B cell (primary cell): ENCODE measurements at regions of chr16 and their contacts with region 1.

Region 1: DNA sequence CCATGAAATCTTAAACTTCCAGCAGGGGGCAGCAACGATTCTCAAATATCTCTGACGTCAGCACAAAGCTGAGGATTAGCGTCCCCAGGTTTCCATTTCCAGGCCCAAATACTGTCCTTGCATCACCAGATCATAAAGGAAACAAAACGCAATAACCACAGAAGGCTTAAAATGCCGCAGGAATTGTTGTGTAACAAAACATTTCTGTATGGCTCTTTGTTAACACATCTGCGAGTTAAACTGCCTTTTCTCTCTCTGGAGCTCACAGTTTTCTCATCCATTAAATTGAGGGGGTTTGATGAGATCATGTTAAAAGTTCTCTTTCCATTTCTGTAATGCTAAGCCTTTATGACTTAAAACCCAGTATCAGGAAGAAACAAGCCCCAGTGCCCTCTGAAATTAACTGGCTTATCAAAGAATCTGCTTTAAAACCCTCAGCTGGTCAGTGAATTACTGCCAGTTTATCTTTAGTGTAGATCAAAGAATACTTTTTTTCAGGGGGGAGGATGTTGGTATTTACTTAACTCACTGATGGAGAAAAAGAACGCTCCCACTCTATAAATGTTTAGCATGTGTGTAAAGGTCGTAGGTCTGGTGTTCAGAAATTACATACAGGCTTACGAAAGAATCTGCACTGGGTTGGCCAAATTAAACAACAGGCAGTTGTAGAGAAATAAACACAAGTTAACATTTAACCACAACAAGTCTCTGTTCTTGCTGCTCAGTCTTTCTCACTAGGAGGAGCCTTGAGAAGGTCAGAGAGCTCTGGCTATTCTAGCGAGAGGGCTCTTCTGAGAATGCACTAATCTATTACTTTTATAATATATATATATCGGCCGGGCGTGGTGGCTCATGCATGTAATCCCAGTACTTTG is 10.6 kb upstream of the TERF2 start:
- DNase-seq: peak; percentile 83
- ATAC-seq: peak; percentile 73
- H3K4me3 ChIP-seq: no peak overlapping the region
- H3K4me3 Mint-ChIP-seq: no peak overlapping the region
- H3K27ac ChIP-seq: peak overlapping the region in 1 of 2 donors; percentile 4
- H3K27ac Mint-ChIP-seq: no peak overlapping the region
- H3K4me1 ChIP-seq: no peaks in the 10 kb centered on the region
- H3K4me1 Mint-ChIP-seq: peaks cover 3% of the 10 kb centered on the region
- H3K27me3 ChIP-seq: no peaks in the 10 kb centered on the region
- H3K27me3 Mint-ChIP-seq: no peaks in the 10 kb centered on the region
- CTCF ChIP-seq: peak; percentile 82

Region 2: GRCh38 chr16:69417520-69418199 is 21.2 kb after region 1 on chr16:
- CTCF ChIA-PET with region 1: interaction called, 5 read pairs
- POLR2A ChIA-PET with region 1: interaction called, 15 read pairs
- intact Hi-C with region 1: no loop called
- DNase-seq: no peak
- ATAC-seq: no peak
- H3K4me3 ChIP-seq: no peak overlapping the region
- H3K4me3 Mint-ChIP-seq: no peak overlapping the region
- H3K27ac ChIP-seq: no peak overlapping the region
- H3K27ac Mint-ChIP-seq: no peak overlapping the region
- H3K4me1 ChIP-seq: no peaks in the 10 kb centered on the region
- H3K4me1 Mint-ChIP-seq: no peaks in the 10 kb centered on the region
- H3K27me3 ChIP-seq: no peaks in the 10 kb centered on the region
- H3K27me3 Mint-ChIP-seq: no peaks in the 10 kb centered on the region
- CTCF ChIP-seq: no peak

Region 3: DNA sequence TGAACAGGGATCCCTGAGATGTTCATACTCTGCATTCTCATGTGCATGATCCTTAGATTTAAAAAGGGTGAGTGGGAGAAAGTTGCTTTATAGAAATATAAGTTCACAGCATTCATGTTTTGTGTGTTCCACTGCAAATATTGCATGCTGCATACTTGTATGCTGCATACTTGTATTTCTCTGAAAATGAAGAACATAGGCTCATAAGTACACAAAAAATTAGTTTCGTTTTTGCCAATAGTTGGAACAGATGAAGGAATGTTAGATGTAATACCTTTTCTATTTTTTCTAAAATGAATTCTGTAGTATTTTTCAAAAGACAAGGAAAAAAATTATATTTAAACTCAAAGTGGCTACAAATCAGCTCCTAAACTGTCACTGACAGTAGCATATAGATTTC is 248.4 kb after region 1 on chr16:
- CTCF ChIA-PET with region 1: interaction called, 4 read pairs
- POLR2A ChIA-PET with region 1: no interaction called
- intact Hi-C with region 1: loop called (anchors 5 kb)
- DNase-seq: no peak
- ATAC-seq: no peak
- H3K4me3 ChIP-seq: no peak overlapping the region
- H3K4me3 Mint-ChIP-seq: no peak overlapping the region
- H3K27ac ChIP-seq: no peak overlapping the region
- H3K27ac Mint-ChIP-seq: no peak overlapping the region
- H3K4me1 ChIP-seq: no peaks in the 10 kb centered on the region
- H3K4me1 Mint-ChIP-seq: no peaks in the 10 kb centered on the region
- H3K27me3 ChIP-seq: no peaks in the 10 kb centered on the region
- H3K27me3 Mint-ChIP-seq: no peaks in the 10 kb centered on the region
- CTCF ChIP-seq: no peak

Region 4: GRCh38 chr16:69754469-69755310 is 358.3 kb after region 1 on chr16 and contains the start of gene NOB1:
- CTCF ChIA-PET with region 1: interaction called, 33 read pairs
- POLR2A ChIA-PET with region 1: interaction called, 3 read pairs
- intact Hi-C with region 1: loop called (anchors 1 kb)
- DNase-seq: peak; percentile 99
- ATAC-seq: peak; percentile 96
- H3K4me3 ChIP-seq: peak within 1 kb of the TSS; percentile 73 to 100 (median 91)
- H3K4me3 Mint-ChIP-seq: peak within 1 kb of the TSS; percentile 99
- H3K27ac ChIP-seq: peak within 1 kb of the TSS; percentile 61 to 76
- H3K27ac Mint-ChIP-seq: peak within 1 kb of the TSS; percentile 94
- H3K4me1 ChIP-seq: peaks cover 8 to 20% of the 10 kb centered on the region in 2 donors
- H3K4me1 Mint-ChIP-seq: peaks cover 21% of the 10 kb centered on the region
- H3K27me3 ChIP-seq: no peaks in the 10 kb centered on the region
- H3K27me3 Mint-ChIP-seq: no peaks in the 10 kb centered on the region
- CTCF ChIP-seq: peak; percentile 92
- total RNA-seq, gene NOB1: 44.9 and 49.6 TPM in 2 replicates

Region 5: DNA sequence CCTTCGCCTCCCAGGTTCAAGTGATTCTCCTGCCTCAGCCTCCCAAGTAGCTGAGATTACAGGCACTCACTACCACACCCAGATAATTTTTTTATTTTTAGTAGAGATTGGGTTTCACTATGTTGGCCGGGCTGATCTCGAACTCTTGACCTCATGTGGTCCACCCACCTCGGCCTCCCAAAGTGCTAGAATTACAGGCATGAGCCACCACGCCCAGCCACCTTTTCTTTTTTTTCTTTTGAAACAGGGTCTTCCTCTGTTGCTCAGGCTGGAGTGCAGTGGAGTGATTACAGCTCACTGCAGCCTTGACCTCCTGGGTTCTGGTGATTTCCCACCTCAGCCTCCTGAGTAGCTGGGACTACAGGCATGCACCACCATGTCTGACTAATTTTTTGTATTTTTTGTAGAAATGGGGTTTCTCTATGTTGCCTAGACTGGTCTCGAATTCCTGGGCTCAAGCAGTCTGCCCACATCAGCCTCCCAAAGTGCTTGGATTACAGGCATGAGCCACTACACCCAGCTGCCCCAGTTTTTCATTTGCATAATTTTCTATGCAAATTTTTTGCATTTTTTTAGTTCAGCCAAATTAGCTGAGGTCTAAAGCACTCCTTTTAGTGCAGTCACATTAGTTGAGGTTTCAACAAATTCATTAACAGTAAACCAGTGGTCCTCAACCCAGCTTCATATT is 377.0 kb after region 1 on chr16:
- CTCF ChIA-PET with region 1: no interaction called
- POLR2A ChIA-PET with region 1: no interaction called
- intact Hi-C with region 1: no loop called
- DNase-seq: no peak
- ATAC-seq: peak; percentile 28
- H3K4me3 ChIP-seq: no peak overlapping the region
- H3K4me3 Mint-ChIP-seq: peak overlapping the region; percentile 5
- H3K27ac ChIP-seq: no peak overlapping the region
- H3K27ac Mint-ChIP-seq: no peak overlapping the region
- H3K4me1 ChIP-seq: peaks cover 27 to 39% of the 10 kb centered on the region in 2 donors
- H3K4me1 Mint-ChIP-seq: peaks cover 54% of the 10 kb centered on the region
- H3K27me3 ChIP-seq: no peaks in the 10 kb centered on the region
- H3K27me3 Mint-ChIP-seq: no peaks in the 10 kb centered on the region
- CTCF ChIP-seq: no peak